GM12878 (cell line): ENCODE measurements at regions of chr5 and their contacts with region 1.

Region 1: DNA sequence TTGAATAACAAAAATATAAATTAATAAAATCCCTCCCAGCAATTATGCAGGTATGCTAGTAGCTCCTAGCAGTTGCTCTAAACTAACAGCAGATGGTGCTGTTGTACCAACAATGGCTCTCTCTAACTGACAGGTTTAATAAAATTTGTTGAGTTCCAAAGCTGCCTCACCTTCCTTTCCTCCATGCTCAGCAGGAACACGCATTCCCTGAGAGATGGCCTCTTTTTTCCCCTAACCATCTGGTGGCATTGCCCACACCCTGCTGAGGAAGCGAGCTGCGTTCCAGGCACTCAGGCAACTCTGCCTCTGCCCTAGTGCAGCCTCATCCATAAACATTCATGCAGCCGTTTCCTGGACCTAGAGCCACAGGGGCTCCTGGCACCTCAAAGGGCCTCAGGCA is 106.2 kb downstream of the KLHL3 start:
- DNase-seq: peak; percentile 8
- ATAC-seq: peak; percentile 92
- H3K4me3 ChIP-seq: no peak overlapping the region
- H3K27ac ChIP-seq: no peak overlapping the region
- H3K4me1 ChIP-seq: no peaks in the 10 kb centered on the region
- H3K27me3 ChIP-seq: no peaks in the 10 kb centered on the region
- CTCF ChIP-seq: peak; percentile 75 to 89 (median 86)
- EP300 ChIP-seq: no peak
- POLR2A ChIP-seq: no peak
- RAD21 ChIP-seq: peak; percentile 90

Region 2: GRCh38 chr5:137545956-137546355 is 83.7 kb before region 1 on chr5:
- CTCF ChIA-PET with region 1: no interaction called
- POLR2A ChIA-PET with region 1: no interaction called
- RAD21 ChIA-PET with region 1: no interaction called
- SMC1A ChIA-PET with region 1: no interaction called
- in situ Hi-C with region 1: no loop called
- intact Hi-C with region 1: no loop called
- DNase-seq: no peak
- ATAC-seq: no peak
- H3K4me3 ChIP-seq: no peak overlapping the region
- H3K27ac ChIP-seq: no peak overlapping the region
- H3K4me1 ChIP-seq: no peaks in the 10 kb centered on the region
- H3K27me3 ChIP-seq: no peaks in the 10 kb centered on the region; a peak in 2 of 4 replicates
- CTCF ChIP-seq: no peak
- EP300 ChIP-seq: no peak
- POLR2A ChIP-seq: no peak
- RAD21 ChIP-seq: no peak

Region 3: DNA sequence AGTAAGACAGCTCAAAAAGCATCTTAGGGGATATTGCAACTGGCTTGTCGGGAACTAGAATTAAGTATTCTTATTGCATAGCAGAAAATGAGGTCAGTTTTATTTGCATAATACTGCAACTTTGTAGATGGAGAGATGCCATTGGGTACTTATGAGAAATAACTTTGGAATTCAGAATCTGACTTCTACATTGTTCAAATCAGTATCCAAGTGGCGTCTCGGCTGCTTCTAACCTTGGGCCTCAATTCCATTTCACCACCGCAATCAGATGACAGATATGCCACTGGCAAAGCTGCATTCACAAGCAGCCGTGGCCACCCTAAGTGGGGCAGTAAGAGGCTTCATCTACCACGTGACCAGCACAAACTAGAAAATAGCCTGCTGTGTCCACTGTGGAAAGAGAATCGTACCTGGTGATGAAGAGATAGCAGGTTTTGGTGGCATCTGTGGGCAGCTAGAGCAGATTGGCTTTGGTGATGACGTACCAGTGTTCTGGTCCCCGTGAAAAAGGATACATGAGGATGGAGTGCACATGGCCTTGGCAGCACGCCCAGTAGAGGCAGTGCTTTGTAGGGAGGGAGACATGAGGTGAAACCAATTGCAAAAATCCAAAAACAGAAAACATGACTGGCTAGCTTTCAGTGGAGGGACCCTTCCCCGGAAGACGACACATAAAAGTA is 10.3 kb before region 1 on chr5:
- CTCF ChIA-PET with region 1: interaction called, 15 read pairs
- POLR2A ChIA-PET with region 1: no interaction called
- RAD21 ChIA-PET with region 1: interaction called, 3 read pairs
- SMC1A ChIA-PET with region 1: interaction called, 6 read pairs
- in situ Hi-C with region 1: no loop called
- intact Hi-C with region 1: no loop called
- DNase-seq: no peak
- ATAC-seq: no peak
- H3K4me3 ChIP-seq: no peak overlapping the region
- H3K27ac ChIP-seq: no peak overlapping the region
- H3K4me1 ChIP-seq: peaks cover 3% of the 10 kb centered on the region
- H3K27me3 ChIP-seq: no peaks in the 10 kb centered on the region
- CTCF ChIP-seq: no peak
- EP300 ChIP-seq: no peak
- POLR2A ChIP-seq: no peak
- RAD21 ChIP-seq: no peak

Region 4: DNA sequence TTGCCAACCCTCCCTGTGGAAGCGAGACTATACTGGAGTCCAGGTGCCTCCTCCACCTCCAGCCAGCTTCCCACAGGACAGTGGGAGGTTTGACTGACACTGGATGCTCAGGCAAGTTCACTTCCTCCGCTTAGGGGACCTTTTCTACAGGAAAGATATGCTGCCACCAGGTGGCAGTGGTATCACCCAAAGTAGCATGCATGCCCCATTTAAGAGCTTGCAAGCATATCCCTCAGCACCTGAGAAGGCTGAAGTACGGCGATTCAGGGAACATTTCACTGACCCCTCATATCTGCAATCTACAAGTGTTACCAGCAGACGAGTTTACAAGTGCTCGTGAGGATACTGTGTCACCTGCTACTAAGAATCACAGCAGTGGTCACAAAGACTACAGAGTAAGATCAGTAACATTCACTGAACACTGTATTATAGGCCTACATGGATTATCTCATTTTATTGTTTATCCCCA is 30.7 kb after region 1 on chr5:
- CTCF ChIA-PET with region 1: interaction called, 31 read pairs
- POLR2A ChIA-PET with region 1: no interaction called
- RAD21 ChIA-PET with region 1: interaction called, 18 read pairs
- SMC1A ChIA-PET with region 1: interaction called, 4 read pairs
- in situ Hi-C with region 1: no loop called
- intact Hi-C with region 1: no loop called
- DNase-seq: peak; percentile 40
- ATAC-seq: peak; percentile 100
- H3K4me3 ChIP-seq: no peak overlapping the region
- H3K27ac ChIP-seq: no peak overlapping the region
- H3K4me1 ChIP-seq: no peaks in the 10 kb centered on the region
- H3K27me3 ChIP-seq: no peaks in the 10 kb centered on the region
- CTCF ChIP-seq: peak; percentile 76 to 84 (median 83)
- EP300 ChIP-seq: no peak
- POLR2A ChIP-seq: no peak
- RAD21 ChIP-seq: peak; percentile 85

Region 5: DNA sequence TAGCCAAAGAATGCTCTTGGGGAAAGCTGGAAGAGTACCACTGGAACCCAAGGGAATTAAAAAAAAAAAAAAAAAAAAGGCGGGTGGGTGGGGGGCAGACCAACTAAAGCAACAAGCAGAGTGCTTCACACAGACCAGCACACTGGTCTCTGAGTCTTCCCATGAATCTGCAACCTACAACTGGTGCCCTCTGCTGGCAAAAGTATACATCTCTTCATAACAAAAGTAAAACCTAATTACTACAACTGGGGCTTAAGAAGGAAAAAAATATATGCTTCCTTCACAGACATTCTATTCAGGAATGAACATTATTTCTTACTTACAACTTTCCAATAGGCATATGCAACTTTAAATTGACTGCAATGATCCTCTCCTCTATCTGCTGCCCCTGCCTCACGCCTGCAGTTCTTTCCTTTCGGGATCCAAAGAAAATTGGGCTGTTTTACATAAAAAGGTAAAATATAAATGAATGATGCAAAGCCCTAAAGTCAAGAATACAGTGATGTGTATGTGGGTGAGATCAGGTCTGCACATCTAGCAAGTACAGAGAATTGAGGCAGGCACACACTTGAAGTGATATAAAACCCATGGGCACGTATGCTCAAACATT is 113.5 kb after region 1 on chr5:
- CTCF ChIA-PET with region 1: interaction called, 195 read pairs
- POLR2A ChIA-PET with region 1: interaction called, 8 read pairs
- RAD21 ChIA-PET with region 1: interaction called, 101 read pairs
- SMC1A ChIA-PET with region 1: interaction called, 106 read pairs
- in situ Hi-C with region 1: loop called (anchors 5 kb)
- intact Hi-C with region 1: loop called (anchors 1 kb)
- DNase-seq: no peak
- ATAC-seq: peak; percentile 84
- H3K4me3 ChIP-seq: no peak overlapping the region
- H3K27ac ChIP-seq: no peak overlapping the region
- H3K4me1 ChIP-seq: no peaks in the 10 kb centered on the region; the same call in 1 of the 2 replicates
- H3K27me3 ChIP-seq: no peaks in the 10 kb centered on the region
- CTCF ChIP-seq: peak; percentile 59 to 79 (median 69)
- EP300 ChIP-seq: no peak
- POLR2A ChIP-seq: no peak
- RAD21 ChIP-seq: peak; percentile 82

Region 6: DNA sequence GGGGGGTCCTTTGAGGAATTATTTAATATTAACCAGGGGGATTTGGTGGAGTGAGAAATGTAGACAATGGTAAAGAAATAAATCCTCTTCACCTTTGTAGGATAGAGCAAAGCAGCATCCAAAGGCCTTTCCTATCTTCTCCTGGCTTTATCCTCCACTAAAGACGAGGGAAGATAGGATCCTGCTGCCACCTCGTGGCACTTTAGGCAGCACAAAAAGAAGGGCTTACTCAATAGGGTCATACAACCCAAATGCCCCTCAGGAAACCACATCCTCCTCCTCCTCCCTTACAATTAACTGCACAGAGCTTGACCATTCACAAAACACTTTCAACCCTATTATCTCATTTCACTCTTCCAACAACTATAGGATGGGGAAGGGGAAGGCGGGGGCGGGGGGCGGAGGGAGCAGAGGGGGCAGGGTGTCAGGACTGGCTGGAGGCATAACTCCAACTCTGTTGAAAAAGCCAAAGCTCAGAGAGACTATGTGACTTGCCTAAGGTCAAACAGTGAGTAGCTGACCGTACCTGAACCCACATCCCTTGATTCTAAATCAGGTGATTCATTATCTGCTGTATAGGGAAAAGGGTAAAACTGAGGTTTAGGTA is 192.6 kb after region 1 on chr5:
- CTCF ChIA-PET with region 1: no interaction called
- POLR2A ChIA-PET with region 1: no interaction called
- RAD21 ChIA-PET with region 1: no interaction called
- SMC1A ChIA-PET with region 1: interaction called, 3 read pairs
- in situ Hi-C with region 1: no loop called
- intact Hi-C with region 1: loop called (anchors 1 kb)
- DNase-seq: no peak
- ATAC-seq: peak; percentile 84
- H3K4me3 ChIP-seq: no peak overlapping the region
- H3K27ac ChIP-seq: no peak overlapping the region
- H3K4me1 ChIP-seq: no peaks in the 10 kb centered on the region
- H3K27me3 ChIP-seq: no peaks in the 10 kb centered on the region
- CTCF ChIP-seq: peak; percentile 26 to 56 (median 46); a peak in 5 of 6 replicates
- EP300 ChIP-seq: no peak
- POLR2A ChIP-seq: no peak
- RAD21 ChIP-seq: peak; percentile 70

Region 7: DNA sequence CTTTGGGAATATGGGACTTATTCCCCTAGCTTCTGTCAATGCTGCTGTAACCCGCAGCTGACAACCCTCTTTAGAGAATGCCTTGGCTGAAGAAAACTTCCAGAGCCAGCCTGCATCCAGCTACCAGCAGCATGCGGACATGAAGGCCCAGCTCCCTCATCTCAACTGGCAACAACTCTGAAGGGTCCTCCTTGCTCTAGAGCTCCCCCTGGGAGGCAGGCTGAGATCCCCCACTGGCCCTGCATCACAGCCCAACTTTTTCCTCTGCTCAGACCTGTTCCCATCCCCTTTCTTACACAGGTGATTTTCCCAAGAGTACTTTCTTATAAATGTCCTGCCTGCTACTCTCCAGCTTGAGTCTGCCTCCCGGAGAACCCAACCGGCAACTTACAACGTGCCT is 435.5 kb after region 1 on chr5:
- CTCF ChIA-PET with region 1: interaction called, 10 read pairs
- POLR2A ChIA-PET with region 1: interaction called, 5 read pairs
- RAD21 ChIA-PET with region 1: no interaction called
- SMC1A ChIA-PET with region 1: interaction called, 5 read pairs
- in situ Hi-C with region 1: loop called (anchors 10 kb)
- intact Hi-C with region 1: loop called (anchors 5 kb)
- DNase-seq: no peak
- ATAC-seq: peak; percentile 66
- H3K4me3 ChIP-seq: no peak overlapping the region
- H3K27ac ChIP-seq: no peak overlapping the region
- H3K4me1 ChIP-seq: no peaks in the 10 kb centered on the region
- H3K27me3 ChIP-seq: no peaks in the 10 kb centered on the region
- CTCF ChIP-seq: peak; percentile 45 to 66 (median 45); a peak in 5 of 6 replicates
- EP300 ChIP-seq: no peak
- POLR2A ChIP-seq: no peak
- RAD21 ChIP-seq: peak; percentile 33; the same call in 1 of the 2 replicates

Region 8: DNA sequence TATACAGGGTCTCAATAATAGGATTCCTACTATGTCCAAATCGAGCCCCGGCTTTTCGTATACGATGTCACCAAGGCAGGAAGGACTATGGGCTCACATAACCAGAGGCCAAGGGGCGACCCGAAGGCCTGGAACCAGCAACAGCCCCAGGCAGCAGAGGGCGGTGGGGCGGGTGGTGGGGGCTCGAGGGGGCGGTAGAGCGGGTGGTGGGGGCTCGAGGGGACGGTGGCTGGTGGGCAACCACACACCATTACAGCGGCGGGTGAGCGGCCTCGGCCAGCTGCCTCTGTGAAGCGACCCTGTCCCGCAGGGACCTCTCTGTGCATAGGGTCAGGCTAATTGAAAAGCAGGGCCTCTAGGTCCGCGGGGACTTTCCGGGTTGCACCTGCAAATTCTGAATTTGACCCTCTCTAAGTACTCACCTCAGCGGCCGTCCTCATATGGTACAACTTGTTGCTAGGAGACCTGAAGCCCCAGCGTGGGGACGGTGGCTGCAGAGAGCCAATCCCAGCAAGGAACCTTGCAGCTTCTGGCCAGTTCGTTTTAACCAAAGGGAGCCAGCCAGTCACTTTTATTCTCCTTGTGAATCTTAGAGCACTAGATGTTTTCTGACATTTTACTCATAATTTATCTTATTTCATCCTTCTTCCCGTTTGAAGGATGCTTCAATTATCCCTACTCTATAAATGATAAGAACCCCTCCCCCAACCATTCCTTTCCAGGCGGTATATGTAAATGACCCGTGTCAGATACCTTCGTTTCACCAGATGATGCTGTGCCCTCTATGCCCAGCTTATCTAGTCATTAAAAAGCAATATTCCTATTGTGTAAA is 509.5 kb after region 1 on chr5 and contains the start of gene NME5:
- CTCF ChIA-PET with region 1: no interaction called
- POLR2A ChIA-PET with region 1: no interaction called
- RAD21 ChIA-PET with region 1: no interaction called
- SMC1A ChIA-PET with region 1: no interaction called
- in situ Hi-C with region 1: no loop called
- intact Hi-C with region 1: loop called (anchors 10 kb)
- DNase-seq: peak; percentile 5
- ATAC-seq: peak; percentile 96
- H3K4me3 ChIP-seq: peak within 1 kb of the TSS; percentile 71
- H3K27ac ChIP-seq: no peak within 1 kb of the TSS
- H3K4me1 ChIP-seq: no peaks in the 10 kb centered on the region
- H3K27me3 ChIP-seq: no peaks in the 10 kb centered on the region
- CTCF ChIP-seq: no peak
- EP300 ChIP-seq: no peak
- POLR2A ChIP-seq: no peak
- RAD21 ChIP-seq: no peak
- polyA plus RNA-seq, gene NME5: 0.22 TPM in 1 of 2 experiments, not detected in the other

Region 9: GRCh38 chr5:138425079-138425478 is 795.4 kb after region 1 on chr5:
- CTCF ChIA-PET with region 1: no interaction called
- POLR2A ChIA-PET with region 1: no interaction called
- RAD21 ChIA-PET with region 1: no interaction called
- SMC1A ChIA-PET with region 1: no interaction called
- in situ Hi-C with region 1: no loop called
- intact Hi-C with region 1: no loop called
- DNase-seq: no peak
- ATAC-seq: no peak
- H3K4me3 ChIP-seq: no peak overlapping the region
- H3K27ac ChIP-seq: no peak overlapping the region
- H3K4me1 ChIP-seq: no peaks in the 10 kb centered on the region
- H3K27me3 ChIP-seq: no peaks in the 10 kb centered on the region
- CTCF ChIP-seq: no peak
- EP300 ChIP-seq: no peak
- POLR2A ChIP-seq: no peak
- RAD21 ChIP-seq: no peak